ENCODE measurements at regions of chr4 and their contacts with region 1.

Region 1: DNA sequence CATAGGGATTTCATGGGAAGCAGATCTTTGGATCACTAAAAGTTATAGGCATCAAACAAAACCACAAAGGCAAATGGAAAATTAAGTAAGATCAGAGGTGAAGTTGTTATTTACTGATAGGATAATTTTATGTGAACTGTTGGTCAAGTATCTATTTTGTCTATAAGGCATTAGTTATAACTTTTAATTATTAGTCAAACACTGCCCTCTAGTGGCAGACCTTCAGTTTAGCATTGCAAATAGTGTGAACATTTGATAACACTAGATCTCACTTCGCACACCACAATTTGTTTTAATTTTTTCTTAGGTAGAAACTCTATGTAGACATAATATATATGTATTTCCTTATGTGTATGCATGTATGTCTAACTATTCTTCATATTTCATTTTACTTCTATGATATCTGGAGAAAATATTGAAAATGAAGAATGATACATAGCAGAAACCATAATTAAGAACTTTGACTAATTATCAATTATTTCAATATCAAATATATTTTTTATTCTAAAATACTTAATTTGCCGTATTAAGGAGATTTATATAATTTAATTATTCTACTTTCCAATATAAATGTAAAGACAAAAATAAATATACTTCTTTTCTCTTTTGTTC is 214.5 kb upstream of the TACR3 start:
- DNase-seq: no peak
- ATAC-seq: peak; percentile 84
- H3K4me3 ChIP-seq: no peak overlapping the region
- H3K27ac ChIP-seq: no peak overlapping the region
- H3K4me1 ChIP-seq: no peaks in the 10 kb centered on the region
- H3K27me3 ChIP-seq: no peaks in the 10 kb centered on the region
- CTCF ChIP-seq: peak; percentile 47 to 71 (median 65); a peak in 5 of 6 replicates
- EP300 ChIP-seq: no peak
- POLR2A ChIP-seq: no peak
- RAD21 ChIP-seq: peak; percentile 61

Region 2: GRCh38 chr4:103046416-103047290 is 887.6 kb before region 1 on chr4:
- CTCF ChIA-PET with region 1: no interaction called
- POLR2A ChIA-PET with region 1: no interaction called
- RAD21 ChIA-PET with region 1: no interaction called
- SMC1A ChIA-PET with region 1: no interaction called
- in situ Hi-C with region 1: no loop called
- intact Hi-C with region 1: loop called (anchors 5 kb)
- DNase-seq: no peak
- ATAC-seq: peak; percentile 98
- H3K4me3 ChIP-seq: no peak overlapping the region
- H3K27ac ChIP-seq: no peak overlapping the region
- H3K4me1 ChIP-seq: peaks cover 6% of the 10 kb centered on the region
- H3K27me3 ChIP-seq: no peaks in the 10 kb centered on the region
- CTCF ChIP-seq: peak; percentile 68 to 78 (median 72)
- EP300 ChIP-seq: no peak
- POLR2A ChIP-seq: no peak
- RAD21 ChIP-seq: peak; percentile 74

Region 3: DNA sequence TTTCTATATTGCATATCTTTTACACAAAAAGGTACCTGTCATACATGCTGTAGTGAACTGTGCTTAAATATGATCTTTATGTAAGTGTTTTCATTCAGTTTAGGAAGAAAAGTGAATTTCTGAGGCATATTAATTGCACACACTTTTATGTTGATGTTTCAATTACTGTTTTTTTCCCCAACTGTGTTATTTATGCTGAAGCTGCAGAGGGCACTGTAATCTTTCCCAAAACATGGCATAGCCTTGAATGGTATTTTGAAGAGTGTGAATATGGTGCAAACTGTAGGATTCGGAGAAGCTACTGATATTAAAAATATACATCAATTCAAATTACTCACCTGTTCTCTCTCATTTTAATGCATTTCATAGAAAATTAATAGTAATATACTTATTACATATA is 730.2 kb before region 1 on chr4:
- CTCF ChIA-PET with region 1: no interaction called
- POLR2A ChIA-PET with region 1: no interaction called
- RAD21 ChIA-PET with region 1: no interaction called
- SMC1A ChIA-PET with region 1: no interaction called
- in situ Hi-C with region 1: loop called (anchors 10 kb)
- intact Hi-C with region 1: loop called (anchors 10 kb)
- DNase-seq: no peak
- ATAC-seq: 0 out of 3 replicates have a peak, but pooled peaks have one; percentile 21
- H3K4me3 ChIP-seq: no peak overlapping the region
- H3K27ac ChIP-seq: no peak overlapping the region
- H3K4me1 ChIP-seq: no peaks in the 10 kb centered on the region
- H3K27me3 ChIP-seq: no peaks in the 10 kb centered on the region
- CTCF ChIP-seq: peak; percentile 6 to 41 (median 18); a peak in 3 of 6 replicates
- EP300 ChIP-seq: no peak
- POLR2A ChIP-seq: no peak
- RAD21 ChIP-seq: peak; percentile 45

Region 4: GRCh38 chr4:103429283-103429682 is 505.0 kb before region 1 on chr4:
- CTCF ChIA-PET with region 1: no interaction called
- POLR2A ChIA-PET with region 1: no interaction called
- RAD21 ChIA-PET with region 1: no interaction called
- SMC1A ChIA-PET with region 1: no interaction called
- in situ Hi-C with region 1: no loop called
- intact Hi-C with region 1: loop called (anchors 5 kb)
- DNase-seq: no peak
- ATAC-seq: peak; percentile 95
- H3K4me3 ChIP-seq: no peak overlapping the region
- H3K27ac ChIP-seq: no peak overlapping the region
- H3K4me1 ChIP-seq: no peaks in the 10 kb centered on the region
- H3K27me3 ChIP-seq: no peaks in the 10 kb centered on the region
- CTCF ChIP-seq: peak; percentile 25 to 49 (median 31); a peak in 5 of 6 replicates
- EP300 ChIP-seq: no peak
- POLR2A ChIP-seq: no peak
- RAD21 ChIP-seq: 0 out of 2 replicates have a peak, but pooled peaks have one; percentile 30

Region 5: GRCh38 chr4:103802768-103803167 is 131.5 kb before region 1 on chr4:
- CTCF ChIA-PET with region 1: no interaction called
- POLR2A ChIA-PET with region 1: no interaction called
- RAD21 ChIA-PET with region 1: no interaction called
- SMC1A ChIA-PET with region 1: no interaction called
- in situ Hi-C with region 1: no loop called
- intact Hi-C with region 1: loop called (anchors 5 kb)
- DNase-seq: no peak
- ATAC-seq: peak; percentile 37; the same call in 1 of the 3 replicates
- H3K4me3 ChIP-seq: no peak overlapping the region
- H3K27ac ChIP-seq: no peak overlapping the region
- H3K4me1 ChIP-seq: no peaks in the 10 kb centered on the region
- H3K27me3 ChIP-seq: no peaks in the 10 kb centered on the region
- CTCF ChIP-seq: peak in 2 of 3 experiments; percentile 5 to 16; a peak in 2 of 6 replicates
- EP300 ChIP-seq: no peak
- POLR2A ChIP-seq: no peak
- RAD21 ChIP-seq: no peak

Measured in GM12878 (cell line).